HepG2 (cell line): ENCODE measurements at regions of chr20 and their contacts with region 1.

Region 1: DNA sequence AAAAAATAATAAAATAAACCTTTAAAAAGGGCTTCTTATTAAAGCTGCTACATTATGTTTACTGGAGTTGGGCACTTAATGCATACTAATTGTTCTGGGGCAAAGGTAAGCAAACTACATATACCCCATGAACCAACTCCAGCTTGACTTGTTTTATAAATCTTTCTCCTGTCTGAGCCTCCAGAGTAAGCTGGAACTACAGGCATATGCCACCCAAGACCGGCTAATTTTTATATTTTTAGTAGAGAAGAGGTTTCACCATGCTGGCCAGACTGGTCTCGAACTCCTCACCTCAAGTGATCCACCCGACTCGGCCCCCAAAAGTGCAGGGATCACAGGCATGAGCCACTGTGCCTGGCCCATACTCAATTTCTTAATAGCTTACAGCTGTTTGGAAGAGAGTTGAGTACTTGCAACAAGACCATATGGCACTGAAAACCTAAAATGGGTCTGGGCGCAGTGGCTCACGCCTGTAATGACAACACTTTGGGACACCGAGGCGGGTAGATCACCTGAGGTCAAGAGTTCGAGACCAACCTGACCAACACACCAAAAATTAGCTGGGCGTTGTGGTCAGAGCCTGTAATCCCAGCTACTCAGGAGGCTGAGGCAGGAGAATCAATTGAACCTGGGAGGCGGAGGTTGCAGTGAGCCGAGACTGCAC is 19.9 kb downstream of the ROMO1 start:
- DNase-seq: no peak
- ATAC-seq: peak; percentile 1; the same call in 2 of the 3 replicates
- H3K4me3 ChIP-seq: no peak overlapping the region
- H3K27ac ChIP-seq: no peak overlapping the region
- H3K4me1 ChIP-seq: 0 out of 2 replicates have a peak, but pooled peaks cover 5% of the 10 kb centered on the region
- H3K27me3 ChIP-seq: no peaks in the 10 kb centered on the region
- CTCF ChIP-seq: no peak
- EP300 ChIP-seq: no peak
- POLR2A ChIP-seq: no peak; a peak in 1 of 4 replicates
- RAD21 ChIP-seq: no peak

Region 2: GRCh38 chr20:35432430-35432735 is 286.7 kb before region 1 on chr20:
- CTCF ChIA-PET with region 1: no interaction called
- POLR2A ChIA-PET with region 1: no interaction called
- in situ Hi-C with region 1: no loop called
- intact Hi-C with region 1: no loop called
- DNase-seq: no peak
- ATAC-seq: peak; percentile 21
- H3K4me3 ChIP-seq: peak overlapping the region; percentile 24 to 67 (median 29); a peak in 4 of 6 replicates
- H3K27ac ChIP-seq: no peak overlapping the region
- H3K4me1 ChIP-seq: peaks cover 43% of the 10 kb centered on the region
- H3K27me3 ChIP-seq: peaks cover 0 to 29% of the 10 kb centered on the region in 2 experiments; a peak in 3 of 5 replicates
- CTCF ChIP-seq: no peak
- EP300 ChIP-seq: no peak
- POLR2A ChIP-seq: no peak
- RAD21 ChIP-seq: no peak

Region 3: DNA sequence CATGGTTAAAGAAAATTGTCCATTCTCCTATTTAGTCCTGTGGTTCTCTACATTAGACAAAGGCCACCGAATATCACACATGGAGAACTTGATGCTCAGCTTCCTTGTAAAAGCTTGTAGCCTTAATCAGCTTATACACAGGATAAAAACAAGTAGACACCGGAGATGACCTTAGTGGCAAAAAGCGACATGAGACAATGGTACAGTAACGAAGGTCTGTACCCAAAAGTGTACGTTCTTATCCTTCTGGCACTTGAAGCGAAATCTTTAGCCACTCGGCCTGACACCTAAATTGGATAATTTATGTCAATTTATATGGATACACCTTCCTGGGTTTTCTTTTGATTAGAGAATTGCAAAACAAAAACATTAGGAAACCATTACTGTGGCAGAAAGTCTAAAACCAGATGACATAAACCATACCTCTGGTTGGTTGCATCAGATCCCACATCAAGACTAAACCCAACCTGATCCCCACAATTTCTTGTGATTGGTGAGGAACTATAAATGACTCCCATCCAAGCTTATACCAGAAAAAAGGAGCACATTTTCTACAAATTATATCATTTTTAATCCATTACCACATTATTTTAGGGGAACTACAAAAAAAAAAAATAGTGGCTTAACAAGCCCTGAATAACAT is 16.8 kb after region 1 on chr20:
- CTCF ChIA-PET with region 1: no interaction called
- POLR2A ChIA-PET with region 1: interaction called, 319 read pairs
- in situ Hi-C with region 1: no loop called
- intact Hi-C with region 1: no loop called
- DNase-seq: no peak
- ATAC-seq: no peak
- H3K4me3 ChIP-seq: no peak overlapping the region; a peak in 1 of 6 replicates
- H3K27ac ChIP-seq: no peak overlapping the region
- H3K4me1 ChIP-seq: peaks cover 96% of the 10 kb centered on the region
- H3K27me3 ChIP-seq: no peaks in the 10 kb centered on the region; a peak in 1 of 5 replicates
- CTCF ChIP-seq: no peak
- EP300 ChIP-seq: no peak
- POLR2A ChIP-seq: peak; percentile 37 to 68; a peak in 2 of 4 replicates
- RAD21 ChIP-seq: no peak

Region 4: DNA sequence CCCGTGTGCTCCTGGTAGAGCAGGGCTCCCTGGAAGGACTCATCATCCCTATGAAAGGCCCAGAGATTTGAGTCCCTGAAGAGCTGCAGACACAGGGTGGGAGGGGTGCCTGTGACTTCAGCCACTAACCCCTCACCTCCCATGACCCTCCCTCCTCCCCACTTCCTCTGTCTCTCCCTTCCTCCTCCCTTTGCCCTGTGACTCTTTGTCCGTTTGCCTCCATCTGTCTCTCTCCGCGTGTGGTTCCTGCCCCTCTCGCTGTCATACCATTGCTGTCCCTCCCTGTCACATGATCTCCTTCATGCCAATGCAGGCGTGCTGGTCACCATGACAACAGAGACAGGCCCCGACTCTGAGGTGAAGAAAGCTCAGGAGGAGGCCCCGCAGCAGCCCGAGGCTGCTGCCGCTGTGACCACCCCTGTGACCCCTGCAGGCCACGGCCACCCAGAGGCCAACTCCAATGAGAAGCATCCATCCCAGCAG is 454.4 kb after region 1 on chr20:
- CTCF ChIA-PET with region 1: no interaction called
- POLR2A ChIA-PET with region 1: no interaction called
- in situ Hi-C with region 1: no loop called
- intact Hi-C with region 1: no loop called
- DNase-seq: no peak
- ATAC-seq: no peak
- H3K4me3 ChIP-seq: no peak overlapping the region
- H3K27ac ChIP-seq: no peak overlapping the region
- H3K4me1 ChIP-seq: peaks cover 20% of the 10 kb centered on the region
- H3K27me3 ChIP-seq: no peaks in the 10 kb centered on the region
- CTCF ChIP-seq: no peak
- EP300 ChIP-seq: no peak
- POLR2A ChIP-seq: no peak
- RAD21 ChIP-seq: no peak